ENCODE measurements at regions of chr7 and their contacts with region 1.

Region 1: DNA sequence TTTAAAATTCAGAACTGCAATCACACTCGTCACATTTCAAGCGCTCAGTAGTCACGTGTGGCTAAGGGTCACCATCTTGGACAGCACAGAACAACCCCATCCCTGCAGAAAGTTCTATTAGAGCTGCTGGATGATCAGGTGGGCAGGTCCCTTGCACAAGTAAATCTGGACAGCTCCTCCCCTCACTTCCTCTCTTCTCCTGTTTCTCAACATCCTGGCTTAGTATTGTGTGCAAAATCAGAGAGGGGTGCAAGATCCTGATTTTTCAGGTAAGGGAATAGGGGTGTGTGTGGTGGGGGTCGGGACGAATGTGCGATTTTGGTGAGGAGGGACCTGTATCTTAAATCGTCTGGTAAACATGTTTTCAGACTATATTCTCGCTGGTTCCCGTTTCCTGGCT is at the start of gene GIMAP4:
- DNase-seq: peak in 4 of 5 donors; percentile 35 to 50 (median 37)
- H3K4me3 ChIP-seq: peak within 1 kb of the TSS; percentile 92 to 96
- H3K4me3 Mint-ChIP-seq: peak within 1 kb of the TSS; percentile 98 to 100 (median 100)
- H3K27ac ChIP-seq: peak within 1 kb of the TSS; percentile 70
- H3K27ac Mint-ChIP-seq: peak within 1 kb of the TSS; percentile 86 to 99 (median 96)
- H3K4me1 ChIP-seq: peaks cover 73% of the 10 kb centered on the region
- H3K4me1 Mint-ChIP-seq: peaks cover 49 to 80% (median 63%) of the 10 kb centered on the region in 4 donors
- H3K27me3 ChIP-seq: no peaks in the 10 kb centered on the region
- H3K27me3 Mint-ChIP-seq: no peaks in the 10 kb centered on the region
- total RNA-seq, gene GIMAP4: 418 to 448 TPM

Region 2: GRCh38 chr7:150388709-150389531 is 178.2 kb before region 1 on chr7:
- CTCF ChIA-PET with region 1: no interaction called
- POLR2A ChIA-PET with region 1: no interaction called
- intact Hi-C with region 1: no loop called
- DNase-seq: no peak
- H3K4me3 ChIP-seq: no peak overlapping the region
- H3K4me3 Mint-ChIP-seq: no peak overlapping the region
- H3K27ac ChIP-seq: no peak overlapping the region
- H3K27ac Mint-ChIP-seq: no peak overlapping the region
- H3K4me1 ChIP-seq: no peaks in the 10 kb centered on the region
- H3K4me1 Mint-ChIP-seq: peaks cover 0 to 2% (median 0%) of the 10 kb centered on the region in 4 donors
- H3K27me3 ChIP-seq: no peaks in the 10 kb centered on the region
- H3K27me3 Mint-ChIP-seq: no peaks in the 10 kb centered on the region

Region 3: DNA sequence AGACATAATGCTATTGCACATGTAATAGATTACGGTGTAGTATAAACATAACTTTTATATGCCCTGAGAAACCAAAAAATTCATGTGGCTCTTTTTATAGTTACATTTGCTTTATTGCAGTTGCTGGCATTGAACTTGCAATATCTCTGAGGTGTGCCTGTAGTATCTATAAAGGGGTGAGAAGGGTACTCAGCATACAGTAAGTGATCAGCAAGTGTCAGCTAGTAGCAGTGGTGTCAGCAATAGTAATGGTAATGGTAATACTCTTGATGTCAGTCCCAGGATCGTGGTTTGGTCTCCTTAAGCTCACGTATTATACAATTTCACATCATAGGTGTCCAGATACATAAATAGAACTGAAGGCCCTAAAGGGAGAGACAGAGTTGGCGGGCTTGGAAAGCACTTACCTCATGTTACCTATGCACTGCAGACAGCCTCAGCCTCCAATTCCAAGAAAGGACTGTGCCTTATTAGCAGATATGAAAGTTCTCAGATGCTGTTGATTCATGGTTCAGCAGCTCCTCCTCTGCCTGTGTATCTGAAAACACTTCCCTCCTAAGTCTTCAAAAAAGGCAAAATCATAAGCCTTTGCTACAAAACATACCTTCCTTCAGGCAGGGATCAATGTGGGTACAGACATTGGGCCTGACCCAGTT is 59.1 kb before region 1 on chr7:
- CTCF ChIA-PET with region 1: interaction called, 21 read pairs
- POLR2A ChIA-PET with region 1: interaction called, 777 read pairs
- intact Hi-C with region 1: no loop called
- DNase-seq: no peak
- H3K4me3 ChIP-seq: peak overlapping the region; percentile 4 to 28
- H3K4me3 Mint-ChIP-seq: peak overlapping the region; percentile 78 to 88 (median 85)
- H3K27ac ChIP-seq: peak overlapping the region; percentile 61
- H3K27ac Mint-ChIP-seq: peak overlapping the region; percentile 89 to 96 (median 93)
- H3K4me1 ChIP-seq: peaks cover 95% of the 10 kb centered on the region
- H3K4me1 Mint-ChIP-seq: peaks cover 78 to 97% (median 87%) of the 10 kb centered on the region in 4 donors
- H3K27me3 ChIP-seq: no peaks in the 10 kb centered on the region
- H3K27me3 Mint-ChIP-seq: no peaks in the 10 kb centered on the region

Region 4: GRCh38 chr7:150580638-150581394 is 13.6 kb after region 1 on chr7:
- CTCF ChIA-PET with region 1: interaction called, 3 read pairs
- POLR2A ChIA-PET with region 1: interaction called, 55 read pairs
- intact Hi-C with region 1: no loop called
- DNase-seq: no peak
- H3K4me3 ChIP-seq: no peak overlapping the region
- H3K4me3 Mint-ChIP-seq: peak overlapping the region in 3 of 8 donors; percentile 26 to 33 (median 33)
- H3K27ac ChIP-seq: no peak overlapping the region
- H3K27ac Mint-ChIP-seq: peak overlapping the region; percentile 47 to 85 (median 68)
- H3K4me1 ChIP-seq: peaks cover 14% of the 10 kb centered on the region
- H3K4me1 Mint-ChIP-seq: peaks cover 22 to 81% (median 36%) of the 10 kb centered on the region in 4 donors
- H3K27me3 ChIP-seq: no peaks in the 10 kb centered on the region
- H3K27me3 Mint-ChIP-seq: no peaks in the 10 kb centered on the region

Region 5: DNA sequence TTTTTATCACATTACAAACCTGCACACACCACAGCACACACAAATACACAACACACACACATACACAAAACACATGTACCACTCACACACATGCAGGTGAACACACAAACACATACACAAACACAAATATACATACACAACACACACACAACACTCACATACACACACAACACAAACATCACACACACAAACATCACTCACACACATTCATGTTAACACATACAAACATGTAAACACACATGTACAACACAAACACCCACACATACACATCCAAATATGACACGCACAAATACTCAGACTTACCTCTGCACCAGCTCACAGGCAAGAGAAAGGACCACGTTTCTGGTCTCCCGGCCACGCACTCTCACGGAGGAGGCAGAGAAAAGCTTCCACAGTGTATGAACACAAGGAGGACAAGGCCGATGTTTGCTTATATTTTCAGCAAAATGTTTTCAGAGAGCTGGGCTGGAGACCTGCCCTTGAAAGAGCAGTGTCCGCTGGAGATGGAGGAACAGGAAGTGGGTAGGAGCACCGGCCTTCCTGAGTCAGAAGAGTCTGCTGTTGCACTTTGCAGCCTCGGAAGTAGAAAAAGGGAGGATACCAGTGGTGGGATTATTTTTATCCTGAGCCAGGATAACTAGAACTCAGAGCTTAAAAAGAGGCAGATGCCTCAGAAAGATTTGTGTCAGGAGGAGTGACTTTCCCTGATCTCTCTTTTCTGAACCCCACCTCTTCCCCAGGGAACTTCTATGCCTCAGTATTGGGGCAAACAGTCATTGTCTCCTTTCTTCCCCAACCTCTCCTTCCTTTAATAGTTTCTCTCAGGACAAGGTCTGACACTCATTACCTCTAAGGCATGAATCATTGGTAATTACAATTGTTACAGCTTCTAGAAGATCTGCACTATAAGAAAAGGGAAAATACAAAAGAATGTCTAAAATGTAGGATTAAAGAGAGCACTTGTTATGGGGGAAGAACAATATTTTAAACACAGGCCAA is 65.0 kb after region 1 on chr7 and contains the start of gene GIMAP6:
- CTCF ChIA-PET with region 1: interaction called, 27 read pairs
- POLR2A ChIA-PET with region 1: interaction called, 219 read pairs
- intact Hi-C with region 1: loop called (anchors 2 kb)
- DNase-seq: peak; percentile 36 to 51 (median 44)
- H3K4me3 ChIP-seq: peak within 1 kb of the TSS; percentile 69 to 75
- H3K4me3 Mint-ChIP-seq: peak within 1 kb of the TSS; percentile 93 to 100 (median 98)
- H3K27ac ChIP-seq: peak within 1 kb of the TSS; percentile 64
- H3K27ac Mint-ChIP-seq: peak within 1 kb of the TSS; percentile 81 to 99 (median 95)
- H3K4me1 ChIP-seq: peaks cover 79% of the 10 kb centered on the region
- H3K4me1 Mint-ChIP-seq: peaks cover 61 to 88% (median 74%) of the 10 kb centered on the region in 4 donors
- H3K27me3 ChIP-seq: no peaks in the 10 kb centered on the region
- H3K27me3 Mint-ChIP-seq: no peaks in the 10 kb centered on the region
- total RNA-seq, gene GIMAP6: 158 to 173 TPM

Region 6: GRCh38 chr7:150695654-150696053 is 128.5 kb after region 1 on chr7:
- CTCF ChIA-PET with region 1: no interaction called
- POLR2A ChIA-PET with region 1: interaction called, 119 read pairs
- intact Hi-C with region 1: no loop called
- DNase-seq: no peak
- H3K4me3 ChIP-seq: no peak overlapping the region
- H3K4me3 Mint-ChIP-seq: peak overlapping the region in 2 of 8 donors; percentile 57
- H3K27ac ChIP-seq: no peak overlapping the region
- H3K27ac Mint-ChIP-seq: peak overlapping the region in 1 of 7 donors; percentile 4
- H3K4me1 ChIP-seq: peaks cover 6% of the 10 kb centered on the region
- H3K4me1 Mint-ChIP-seq: peaks cover 5 to 20% (median 13%) of the 10 kb centered on the region in 4 donors
- H3K27me3 ChIP-seq: no peaks in the 10 kb centered on the region
- H3K27me3 Mint-ChIP-seq: no peaks in the 10 kb centered on the region

Region 7: GRCh38 chr7:150737265-150738055 is 170.3 kb after region 1 on chr7 and contains the start of gene GIMAP5:
- CTCF ChIA-PET with region 1: interaction called, 38 read pairs
- POLR2A ChIA-PET with region 1: interaction called, 235 read pairs
- intact Hi-C with region 1: loop called (anchors 2 kb)
- DNase-seq: peak in 4 of 5 donors; percentile 58 to 74 (median 61)
- H3K4me3 ChIP-seq: peak within 1 kb of the TSS; percentile 81 to 82
- H3K4me3 Mint-ChIP-seq: peak within 1 kb of the TSS; percentile 92 to 100 (median 98)
- H3K27ac ChIP-seq: peak within 1 kb of the TSS; percentile 83
- H3K27ac Mint-ChIP-seq: peak within 1 kb of the TSS; percentile 86 to 98 (median 96)
- H3K4me1 ChIP-seq: peaks cover 64% of the 10 kb centered on the region
- H3K4me1 Mint-ChIP-seq: peaks cover 55 to 94% (median 64%) of the 10 kb centered on the region in 4 donors
- H3K27me3 ChIP-seq: no peaks in the 10 kb centered on the region
- H3K27me3 Mint-ChIP-seq: no peaks in the 10 kb centered on the region
- total RNA-seq, gene GIMAP5: 296 to 297 TPM